Calu3 (cell line): ENCODE measurements at regions of chr17 and their contacts with region 1.

Region 1: DNA sequence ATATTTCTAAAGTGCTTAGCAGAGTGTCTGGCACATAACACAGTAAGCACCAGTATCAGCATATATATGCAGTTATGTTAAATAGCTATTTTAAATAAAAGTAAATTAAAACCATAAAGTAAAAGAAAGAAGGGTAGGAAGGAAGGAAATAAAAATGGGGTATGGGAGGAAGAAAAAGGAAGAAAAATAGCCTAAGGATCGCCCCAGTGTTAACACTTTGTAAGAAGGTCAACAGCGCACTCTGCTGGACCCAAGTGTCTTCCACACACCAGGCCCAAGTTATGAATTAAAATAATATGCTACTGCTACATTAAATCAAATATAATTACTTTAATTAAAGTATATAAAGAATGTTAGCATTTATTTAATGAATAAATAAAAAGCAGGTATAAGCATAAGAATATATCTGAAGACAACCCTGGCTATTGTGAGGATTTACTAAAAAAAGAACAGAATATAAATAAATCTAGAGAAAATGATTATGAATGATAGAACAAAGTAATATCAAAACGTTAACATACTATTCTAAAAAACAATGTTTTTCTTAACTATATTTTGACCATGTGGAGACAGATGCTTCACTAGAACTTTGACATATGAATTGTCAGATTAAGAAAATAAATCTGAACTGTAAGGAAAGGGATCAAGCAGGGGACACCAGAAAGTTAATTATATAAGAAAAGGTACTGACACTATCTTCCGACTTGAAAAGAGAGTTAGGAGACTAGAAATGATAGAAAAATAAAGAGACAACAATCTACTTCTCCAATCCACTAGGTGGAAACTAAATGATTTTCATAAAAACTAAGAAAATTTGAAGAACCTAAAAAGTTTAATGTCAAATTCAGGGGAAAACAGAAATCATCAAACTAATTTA is 25.9 kb downstream of the BRIP1 start:
- DNase-seq: peak; percentile 39
- H3K4me3 Mint-ChIP-seq: no peak overlapping the region
- H3K27ac Mint-ChIP-seq: no peak overlapping the region
- H3K4me1 Mint-ChIP-seq: no peaks in the 10 kb centered on the region
- H3K27me3 Mint-ChIP-seq: no peaks in the 10 kb centered on the region
- CTCF ChIP-seq: peak; percentile 38

Region 2: GRCh38 chr17:61583242-61583641 is 254.2 kb before region 1 on chr17:
- CTCF ChIA-PET with region 1: no interaction called
- intact Hi-C with region 1: loop called (anchors 5 kb)
- DNase-seq: no peak
- H3K4me3 Mint-ChIP-seq: no peak overlapping the region
- H3K27ac Mint-ChIP-seq: no peak overlapping the region
- H3K4me1 Mint-ChIP-seq: peaks cover 20% of the 10 kb centered on the region
- H3K27me3 Mint-ChIP-seq: no peaks in the 10 kb centered on the region
- CTCF ChIP-seq: no peak

Region 3: DNA sequence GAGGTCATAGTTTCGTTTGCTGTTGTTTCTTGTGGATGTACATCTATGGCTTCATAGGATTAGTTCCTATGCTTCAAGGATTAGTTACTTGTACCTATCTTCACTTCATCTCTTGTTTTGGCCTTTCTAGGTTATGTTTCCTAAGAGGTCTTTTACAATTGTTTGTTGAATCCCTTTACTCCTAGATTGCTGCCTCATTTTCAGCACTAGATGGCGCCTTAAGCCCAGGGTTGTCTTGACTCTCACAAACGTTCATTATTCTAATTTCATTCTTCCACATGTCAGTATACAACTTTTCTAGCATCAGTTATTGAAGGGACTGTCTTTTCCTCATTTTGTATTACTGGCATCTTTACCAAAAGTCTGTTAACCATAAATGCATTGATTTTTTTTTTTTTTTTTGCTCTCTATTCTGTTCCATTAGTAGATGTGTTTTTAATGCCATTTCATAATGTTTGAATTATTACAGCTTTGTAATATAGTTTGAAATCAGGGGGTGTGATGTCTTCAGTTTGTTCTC is 201.4 kb before region 1 on chr17:
- CTCF ChIA-PET with region 1: no interaction called
- intact Hi-C with region 1: loop called (anchors 1 kb)
- DNase-seq: peak; percentile 44
- H3K4me3 Mint-ChIP-seq: no peak overlapping the region
- H3K27ac Mint-ChIP-seq: no peak overlapping the region
- H3K4me1 Mint-ChIP-seq: no peaks in the 10 kb centered on the region
- H3K27me3 Mint-ChIP-seq: no peaks in the 10 kb centered on the region
- CTCF ChIP-seq: no peak

Region 4: GRCh38 chr17:62017610-62018261 is 180.3 kb after region 1 on chr17:
- CTCF ChIA-PET with region 1: no interaction called
- intact Hi-C with region 1: no loop called
- DNase-seq: no peak
- H3K4me3 Mint-ChIP-seq: no peak overlapping the region
- H3K27ac Mint-ChIP-seq: no peak overlapping the region
- H3K4me1 Mint-ChIP-seq: no peaks in the 10 kb centered on the region
- H3K27me3 Mint-ChIP-seq: no peaks in the 10 kb centered on the region
- CTCF ChIP-seq: no peak